CD4-positive, alpha-beta memory T cell (primary cell): ENCODE measurements at regions of chr13 and their contacts with region 1.

Region 1: DNA sequence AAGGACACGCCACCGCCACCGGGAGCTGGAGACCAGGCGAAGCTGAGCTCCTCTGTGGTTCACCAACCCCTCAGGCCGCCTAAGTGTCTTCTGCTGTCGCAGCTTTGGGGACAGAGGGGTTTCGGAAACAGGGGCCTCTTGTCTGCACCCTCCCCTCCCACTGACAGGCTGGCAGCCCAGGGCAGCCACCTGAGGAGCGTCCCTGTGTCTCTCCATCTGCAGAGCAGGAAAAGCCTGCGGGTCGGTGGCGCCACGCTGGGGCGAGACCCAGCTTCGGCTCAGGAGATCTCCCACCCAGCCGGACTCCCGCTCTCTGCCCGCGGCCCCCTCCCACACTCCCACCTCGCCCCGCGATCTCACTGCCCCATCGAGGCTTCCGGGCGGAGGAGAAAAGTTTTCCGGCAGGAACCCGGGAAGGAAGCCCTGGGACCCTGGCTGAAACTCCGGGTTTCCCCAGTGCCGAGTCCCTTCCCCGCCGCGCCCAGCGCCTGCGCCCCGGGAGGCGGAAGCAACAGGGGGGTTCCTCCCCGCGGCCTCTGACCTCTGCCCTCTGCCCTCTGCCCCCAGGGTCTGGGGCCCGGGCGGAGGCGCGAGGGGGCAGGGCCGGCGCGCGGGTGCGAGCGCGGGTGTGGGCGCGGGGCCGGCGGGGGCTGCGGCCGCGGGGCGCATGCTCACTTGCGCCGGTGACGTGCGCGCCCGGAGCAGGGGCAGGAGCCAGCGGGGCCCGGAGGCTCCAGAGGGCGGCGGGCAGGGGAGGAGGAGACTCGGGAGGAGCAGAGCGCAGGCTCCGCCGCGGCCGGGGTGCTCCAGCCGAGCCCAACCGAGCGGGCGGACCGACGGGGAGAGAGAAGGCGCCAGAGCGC is at the start of gene ATP11A:
- DNase-seq: peak; percentile 77 to 85 (median 82)
- H3K4me3 ChIP-seq: peak within 1 kb of the TSS; percentile 58 to 73
- H3K4me3 Mint-ChIP-seq: peak within 1 kb of the TSS; percentile 87 to 95 (median 91)
- H3K27ac ChIP-seq: peak within 1 kb of the TSS; percentile 87
- H3K27ac Mint-ChIP-seq: peak within 1 kb of the TSS; percentile 88 to 95 (median 92)
- H3K4me1 ChIP-seq: peaks cover 44% of the 10 kb centered on the region
- H3K4me1 Mint-ChIP-seq: peaks cover 42 to 62% (median 48%) of the 10 kb centered on the region in 4 donors
- H3K27me3 ChIP-seq: no peaks in the 10 kb centered on the region
- H3K27me3 Mint-ChIP-seq: no peaks in the 10 kb centered on the region
- total RNA-seq, gene ATP11A: 50.2 to 50.5 TPM

Region 2: DNA sequence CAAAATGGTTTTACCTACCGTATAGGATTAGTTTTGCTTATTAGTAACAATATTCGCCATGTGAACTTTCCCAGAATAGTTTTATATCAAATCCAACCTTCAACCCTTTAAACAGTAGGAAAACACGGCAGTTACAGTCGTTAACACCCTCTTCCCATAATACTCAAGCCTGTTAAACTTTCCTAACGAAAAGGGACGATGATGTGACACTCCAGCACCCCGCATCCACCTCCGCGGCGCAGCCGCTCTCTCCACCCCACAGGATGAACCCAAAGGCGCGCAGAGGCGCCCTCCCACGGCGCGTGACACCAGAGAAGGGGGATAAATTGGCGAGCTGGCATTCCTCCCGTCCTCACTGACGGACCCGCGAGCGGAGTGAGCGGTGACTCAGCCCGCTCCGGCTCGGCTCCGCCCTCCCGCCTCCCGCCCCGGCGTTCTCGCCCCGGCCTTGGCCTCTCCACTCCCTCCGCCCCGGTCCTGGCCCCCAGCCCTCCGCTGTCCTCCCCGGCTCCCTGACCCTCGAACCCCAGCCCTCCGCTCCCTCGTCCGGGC is 102.2 kb before region 1 on chr13:
- CTCF ChIA-PET with region 1: no interaction called
- POLR2A ChIA-PET with region 1: interaction called, 4 read pairs
- intact Hi-C with region 1: loop called (anchors 5 kb)
- DNase-seq: peak; percentile 42 to 77 (median 44)
- H3K4me3 ChIP-seq: peak overlapping the region; percentile 72 to 74
- H3K4me3 Mint-ChIP-seq: peak overlapping the region; percentile 90 to 95 (median 94)
- H3K27ac ChIP-seq: peak overlapping the region; percentile 58
- H3K27ac Mint-ChIP-seq: peak overlapping the region; percentile 82 to 95 (median 94)
- H3K4me1 ChIP-seq: peaks cover 32% of the 10 kb centered on the region
- H3K4me1 Mint-ChIP-seq: peaks cover 24 to 55% (median 39%) of the 10 kb centered on the region in 4 donors
- H3K27me3 ChIP-seq: no peaks in the 10 kb centered on the region
- H3K27me3 Mint-ChIP-seq: no peaks in the 10 kb centered on the region

Region 3: DNA sequence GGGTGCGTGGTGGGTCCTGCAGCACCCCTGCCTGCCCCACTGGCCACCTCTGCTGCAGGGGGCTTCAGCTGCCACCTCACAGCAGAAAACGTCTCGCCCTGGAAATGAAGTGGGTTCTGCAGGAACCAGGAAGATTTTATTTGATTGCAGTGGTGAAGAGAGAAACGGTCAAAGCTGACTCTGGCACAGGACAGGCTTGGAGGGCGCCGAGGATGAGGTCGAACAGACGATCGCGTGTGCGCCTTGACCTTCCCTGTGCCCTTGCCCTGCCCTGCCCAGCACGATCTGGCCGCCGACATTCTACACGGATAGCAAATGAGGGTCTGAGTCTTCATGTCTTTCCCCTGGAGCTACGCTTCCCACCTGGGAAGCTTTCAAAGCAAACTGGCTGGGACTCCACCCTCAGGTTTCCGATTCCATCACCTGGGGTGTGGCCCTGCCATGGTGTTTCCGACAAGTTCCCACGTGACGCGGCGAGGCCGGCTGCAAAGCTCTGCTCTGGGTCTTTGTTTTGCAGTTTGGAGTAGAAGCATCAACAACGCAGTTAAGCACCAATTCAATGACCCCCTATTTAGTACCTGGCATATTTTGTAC is 51.3 kb before region 1 on chr13:
- CTCF ChIA-PET with region 1: interaction called, 6 read pairs
- POLR2A ChIA-PET with region 1: no interaction called
- intact Hi-C with region 1: loop called (anchors 1 kb)
- DNase-seq: peak in 1 of 5 donors; percentile 4
- H3K4me3 ChIP-seq: no peak overlapping the region
- H3K4me3 Mint-ChIP-seq: peak overlapping the region in 3 of 8 donors; percentile 5 to 49 (median 15)
- H3K27ac ChIP-seq: no peak overlapping the region
- H3K27ac Mint-ChIP-seq: no peak overlapping the region
- H3K4me1 ChIP-seq: peaks cover 7% of the 10 kb centered on the region
- H3K4me1 Mint-ChIP-seq: peaks cover 0 to 10% (median 5%) of the 10 kb centered on the region in 4 donors
- H3K27me3 ChIP-seq: no peaks in the 10 kb centered on the region
- H3K27me3 Mint-ChIP-seq: peaks cover 17 to 20% of the 10 kb centered on the region in 2 donors

Region 4: GRCh38 chr13:112674412-112675365 is 14.8 kb before region 1 on chr13:
- CTCF ChIA-PET with region 1: no interaction called
- POLR2A ChIA-PET with region 1: interaction called, 3 read pairs
- intact Hi-C with region 1: loop called (anchors 2 kb)
- DNase-seq: no peak
- H3K4me3 ChIP-seq: no peak overlapping the region
- H3K4me3 Mint-ChIP-seq: peak overlapping the region in 2 of 8 donors; percentile 28 to 61
- H3K27ac ChIP-seq: no peak overlapping the region
- H3K27ac Mint-ChIP-seq: peak overlapping the region in 2 of 7 donors; percentile 48 to 64
- H3K4me1 ChIP-seq: peaks cover 17% of the 10 kb centered on the region
- H3K4me1 Mint-ChIP-seq: peaks cover 4 to 12% (median 9%) of the 10 kb centered on the region in 4 donors
- H3K27me3 ChIP-seq: no peaks in the 10 kb centered on the region
- H3K27me3 Mint-ChIP-seq: no peaks in the 10 kb centered on the region

Region 5: GRCh38 chr13:112704308-112705145 is 15.0 kb after region 1 on chr13:
- CTCF ChIA-PET with region 1: no interaction called
- POLR2A ChIA-PET with region 1: no interaction called
- intact Hi-C with region 1: no loop called
- DNase-seq: no peak
- H3K4me3 ChIP-seq: no peak overlapping the region
- H3K4me3 Mint-ChIP-seq: peak overlapping the region in 1 of 8 donors; percentile 5
- H3K27ac ChIP-seq: no peak overlapping the region
- H3K27ac Mint-ChIP-seq: no peak overlapping the region
- H3K4me1 ChIP-seq: peaks cover 14% of the 10 kb centered on the region
- H3K4me1 Mint-ChIP-seq: peaks cover 16 to 53% (median 32%) of the 10 kb centered on the region in 4 donors
- H3K27me3 ChIP-seq: no peaks in the 10 kb centered on the region
- H3K27me3 Mint-ChIP-seq: no peaks in the 10 kb centered on the region